ENCODE measurements at regions of chr11 and their contacts with region 1.

Region 1: GRCh38 chr11:43399983-43400630 is 41.4 kb downstream of the TTC17 start:
- DNase-seq: no peak
- ATAC-seq: no peak
- H3K4me3 ChIP-seq: no peak overlapping the region
- H3K27ac ChIP-seq: no peak overlapping the region
- H3K4me1 ChIP-seq: peaks cover 0 to 3% (median 0%) of the 10 kb centered on the region in 3 donors
- H3K27me3 ChIP-seq: no peaks in the 10 kb centered on the region
- CTCF ChIP-seq: no peak

Region 2: DNA sequence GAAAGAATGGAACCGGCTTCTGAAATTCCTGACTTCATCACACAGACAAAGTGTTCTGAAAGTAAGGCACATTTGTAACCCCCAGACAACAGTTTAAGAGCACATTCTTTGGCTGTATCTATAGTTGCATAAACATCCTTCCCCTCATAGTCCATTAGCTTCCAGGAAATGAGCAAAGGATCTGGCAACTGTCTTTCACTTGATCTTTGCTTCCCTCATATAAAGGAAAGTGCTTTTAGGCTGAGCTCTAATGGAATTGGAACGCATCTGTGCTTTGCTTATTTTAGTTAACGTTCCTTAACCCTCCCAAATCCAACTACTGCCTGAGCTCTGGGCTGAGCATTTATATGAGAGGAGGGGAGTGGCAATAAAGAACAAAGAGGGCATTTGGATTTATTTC is 165.2 kb before region 1 on chr11:
- intact Hi-C with region 1: no loop called
- DNase-seq: no peak
- ATAC-seq: no peak
- H3K4me3 ChIP-seq: no peak overlapping the region
- H3K27ac ChIP-seq: no peak overlapping the region
- H3K4me1 ChIP-seq: no peaks in the 10 kb centered on the region
- H3K27me3 ChIP-seq: no peaks in the 10 kb centered on the region
- CTCF ChIP-seq: no peak

Region 3: DNA sequence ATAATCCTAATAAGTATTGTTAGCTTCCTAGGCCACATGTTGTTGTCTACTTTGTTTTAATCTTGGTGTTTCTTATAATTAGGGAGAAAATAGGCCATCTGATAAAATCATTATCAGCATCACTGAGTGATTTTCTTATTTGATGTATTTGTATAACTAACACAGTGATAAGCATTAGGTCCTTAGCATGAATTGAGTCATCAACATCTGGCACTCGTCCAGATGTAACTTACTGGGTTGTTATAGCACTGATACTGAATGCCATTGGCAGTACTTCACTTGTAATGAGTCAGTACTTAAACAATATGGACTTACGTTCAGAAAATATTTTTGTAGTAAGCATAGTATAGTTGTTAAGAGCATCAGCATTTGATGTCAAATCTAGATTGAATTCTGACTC is 72.1 kb before region 1 on chr11:
- intact Hi-C with region 1: loop called in 1 of 3 experiments (anchors 10 kb)
- DNase-seq: peak in 1 of 6 donors; percentile 58
- ATAC-seq: peak; percentile 53 to 82 (median 70)
- H3K4me3 ChIP-seq: no peak overlapping the region
- H3K27ac ChIP-seq: no peak overlapping the region
- H3K4me1 ChIP-seq: no peaks in the 10 kb centered on the region
- H3K27me3 ChIP-seq: no peaks in the 10 kb centered on the region
- CTCF ChIP-seq: no peak

Region 4: GRCh38 chr11:43447151-43447550 is 47.0 kb after region 1 on chr11:
- intact Hi-C with region 1: no loop called
- DNase-seq: no peak
- ATAC-seq: no peak
- H3K4me3 ChIP-seq: no peak overlapping the region
- H3K27ac ChIP-seq: no peak overlapping the region
- H3K4me1 ChIP-seq: no peaks in the 10 kb centered on the region
- H3K27me3 ChIP-seq: no peaks in the 10 kb centered on the region
- CTCF ChIP-seq: no peak

Measured in pancreas (tissue), 10 donors.